T-cell (primary cell): ENCODE measurements at regions of chr7 and their contacts with region 1.

Region 1: GRCh38 chr7:20503278-20503950 is 112.1 kb upstream of the ABCB5 start:
- DNase-seq: no peak
- ATAC-seq: no peak
- H3K4me3 ChIP-seq: no peak overlapping the region
- H3K4me3 Mint-ChIP-seq: no peak overlapping the region
- H3K27ac ChIP-seq: no peak overlapping the region
- H3K27ac Mint-ChIP-seq: no peak overlapping the region
- H3K4me1 ChIP-seq: no peaks in the 10 kb centered on the region
- H3K4me1 Mint-ChIP-seq: no peaks in the 10 kb centered on the region
- H3K27me3 ChIP-seq: no peaks in the 10 kb centered on the region
- H3K27me3 Mint-ChIP-seq: no peaks in the 10 kb centered on the region

Region 2: GRCh38 chr7:21448974-21449373 is 945.6 kb after region 1 on chr7:
- CTCF ChIA-PET with region 1: no interaction called
- POLR2A ChIA-PET with region 1: interaction called in 1 of 2 experiments, 16 read pairs
- DNase-seq: no peak
- ATAC-seq: no peak
- H3K4me3 ChIP-seq: no peak overlapping the region
- H3K4me3 Mint-ChIP-seq: no peak overlapping the region
- H3K27ac ChIP-seq: no peak overlapping the region
- H3K27ac Mint-ChIP-seq: no peak overlapping the region
- H3K4me1 ChIP-seq: no peaks in the 10 kb centered on the region
- H3K4me1 Mint-ChIP-seq: peaks cover 55 to 67% (median 65%) of the 10 kb centered on the region in 3 donors
- H3K27me3 ChIP-seq: no peaks in the 10 kb centered on the region
- H3K27me3 Mint-ChIP-seq: no peaks in the 10 kb centered on the region